MCF 10A (cell line): ENCODE measurements at regions of chr7 and their contacts with region 1.

Region 1: GRCh38 chr7:92768501-92769393 is 67.6 kb downstream of the CDK6 start:
- DNase-seq: peak; percentile 44
- H3K4me3 Mint-ChIP-seq: no peak overlapping the region
- H3K27ac Mint-ChIP-seq: peak overlapping the region; percentile 98
- H3K4me1 Mint-ChIP-seq: peaks cover 47% of the 10 kb centered on the region
- H3K27me3 Mint-ChIP-seq: no peaks in the 10 kb centered on the region
- CTCF ChIP-seq: no peak

Region 2: DNA sequence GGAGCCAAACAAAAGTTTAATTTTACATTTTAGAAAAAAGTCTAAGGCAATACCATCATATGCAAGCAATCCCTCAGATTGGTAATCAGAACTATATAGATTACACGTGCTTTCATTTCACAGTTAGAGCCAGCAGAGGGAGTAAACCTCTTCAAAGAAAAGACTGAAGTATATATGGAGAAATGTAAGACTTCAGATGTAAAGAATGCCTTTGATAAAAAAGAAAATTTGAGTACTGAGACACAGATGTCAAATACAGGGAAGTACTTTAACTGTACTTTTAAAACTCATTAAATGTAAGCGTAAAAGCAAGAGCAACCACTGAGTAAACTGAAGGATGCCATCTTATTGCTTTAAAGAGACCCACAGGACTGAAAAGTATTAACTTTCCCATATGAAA is 77.2 kb before region 1 on chr7:
- CTCF ChIA-PET with region 1: interaction called, 6 read pairs
- POLR2A ChIA-PET with region 1: interaction called, 17 read pairs
- intact Hi-C with region 1: loop called (anchors 1 kb)
- DNase-seq: peak; percentile 72
- H3K4me3 Mint-ChIP-seq: no peak overlapping the region
- H3K27ac Mint-ChIP-seq: no peak overlapping the region
- H3K4me1 Mint-ChIP-seq: peaks cover 22% of the 10 kb centered on the region
- H3K27me3 Mint-ChIP-seq: no peaks in the 10 kb centered on the region
- CTCF ChIP-seq: peak; percentile 56

Region 3: GRCh38 chr7:92717993-92718716 is 50.6 kb before region 1 on chr7:
- CTCF ChIA-PET with region 1: interaction called, 4 read pairs
- POLR2A ChIA-PET with region 1: interaction called, 21 read pairs
- intact Hi-C with region 1: no loop called
- DNase-seq: peak; percentile 83
- H3K4me3 Mint-ChIP-seq: peak overlapping the region; percentile 81
- H3K27ac Mint-ChIP-seq: peak overlapping the region; percentile 96
- H3K4me1 Mint-ChIP-seq: peaks cover 28% of the 10 kb centered on the region
- H3K27me3 Mint-ChIP-seq: no peaks in the 10 kb centered on the region
- CTCF ChIP-seq: no peak

Region 4: GRCh38 chr7:92740700-92741126 is 28.0 kb before region 1 on chr7:
- CTCF ChIA-PET with region 1: interaction called, 4 read pairs
- POLR2A ChIA-PET with region 1: interaction called, 18 read pairs
- intact Hi-C with region 1: no loop called
- DNase-seq: peak; percentile 71
- H3K4me3 Mint-ChIP-seq: peak overlapping the region; percentile 39
- H3K27ac Mint-ChIP-seq: peak overlapping the region; percentile 88
- H3K4me1 Mint-ChIP-seq: peaks cover 33% of the 10 kb centered on the region
- H3K27me3 Mint-ChIP-seq: no peaks in the 10 kb centered on the region
- CTCF ChIP-seq: no peak

Region 5: DNA sequence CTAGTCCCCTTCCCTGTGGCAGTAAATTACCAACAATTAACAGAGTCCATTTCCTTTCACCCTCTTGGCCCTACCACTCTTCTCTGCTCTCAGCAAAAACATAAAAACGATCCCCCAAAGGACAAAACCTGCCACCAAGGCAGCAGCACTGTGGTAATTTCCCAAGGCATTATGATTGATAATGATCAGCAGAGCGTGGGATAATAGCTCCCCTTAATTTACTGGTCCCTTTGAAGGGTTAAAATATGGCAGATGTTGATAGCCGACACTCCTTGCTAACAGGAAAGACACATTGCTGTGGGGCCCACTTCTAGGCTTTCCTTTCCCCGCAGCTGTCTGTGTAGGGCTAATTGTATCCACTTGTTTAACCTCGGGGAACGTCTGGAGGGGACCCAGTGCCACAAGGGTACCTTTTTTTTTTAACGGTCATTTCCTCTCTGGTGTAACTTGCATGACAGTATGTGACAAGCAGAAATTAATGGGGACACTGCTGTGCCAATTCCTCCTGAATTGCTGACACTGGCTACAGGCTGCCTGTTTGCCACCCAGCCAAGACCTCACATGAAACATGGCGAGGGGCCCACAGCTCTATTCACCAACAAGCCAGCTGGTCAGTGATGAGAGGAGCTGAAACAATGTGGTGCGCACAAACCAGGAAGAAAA is 13.7 kb before region 1 on chr7:
- CTCF ChIA-PET with region 1: interaction called, 5 read pairs
- POLR2A ChIA-PET with region 1: interaction called, 19 read pairs
- intact Hi-C with region 1: no loop called
- DNase-seq: no peak
- H3K4me3 Mint-ChIP-seq: no peak overlapping the region
- H3K27ac Mint-ChIP-seq: peak overlapping the region; percentile 10
- H3K4me1 Mint-ChIP-seq: peaks cover 31% of the 10 kb centered on the region
- H3K27me3 Mint-ChIP-seq: no peaks in the 10 kb centered on the region
- CTCF ChIP-seq: no peak

Region 6: DNA sequence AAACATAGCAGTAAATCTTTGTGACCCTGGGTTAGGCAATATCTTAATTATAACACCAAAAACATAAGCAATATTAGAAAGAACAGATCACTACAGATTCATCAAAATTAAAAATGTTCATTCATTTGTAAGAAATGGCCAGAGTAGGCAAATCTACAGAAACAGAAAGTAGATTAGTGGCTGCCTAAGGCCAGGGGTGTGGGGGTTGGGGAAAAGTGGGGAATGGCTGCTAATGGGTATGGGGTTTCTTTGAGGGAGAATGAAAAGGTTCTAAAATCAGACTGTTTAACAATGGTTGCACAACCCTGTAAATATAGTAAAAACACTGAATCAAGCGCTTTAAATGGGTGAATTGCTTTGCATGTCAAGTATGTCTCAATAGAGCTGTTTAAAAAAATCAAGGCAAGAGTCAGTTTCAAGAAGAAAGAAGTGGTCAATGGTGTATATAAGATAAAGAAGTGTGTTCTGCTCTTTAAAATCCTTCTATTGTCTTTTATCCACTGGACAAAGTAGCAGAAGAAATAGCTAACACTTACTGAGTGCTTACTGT is 25.0 kb after region 1 on chr7:
- CTCF ChIA-PET with region 1: no interaction called
- POLR2A ChIA-PET with region 1: interaction called, 12 read pairs
- intact Hi-C with region 1: no loop called
- DNase-seq: no peak
- H3K4me3 Mint-ChIP-seq: no peak overlapping the region
- H3K27ac Mint-ChIP-seq: peak overlapping the region; percentile 13
- H3K4me1 Mint-ChIP-seq: peaks cover 50% of the 10 kb centered on the region
- H3K27me3 Mint-ChIP-seq: no peaks in the 10 kb centered on the region
- CTCF ChIP-seq: no peak

Region 7: GRCh38 chr7:92809397-92810241 is 40.9 kb after region 1 on chr7:
- CTCF ChIA-PET with region 1: interaction called, 3 read pairs
- POLR2A ChIA-PET with region 1: interaction called, 27 read pairs
- intact Hi-C with region 1: no loop called
- DNase-seq: peak; percentile 96
- H3K4me3 Mint-ChIP-seq: peak overlapping the region; percentile 35
- H3K27ac Mint-ChIP-seq: peak overlapping the region; percentile 82
- H3K4me1 Mint-ChIP-seq: peaks cover 48% of the 10 kb centered on the region
- H3K27me3 Mint-ChIP-seq: no peaks in the 10 kb centered on the region
- CTCF ChIP-seq: no peak